ENCODE measurements at regions of chr19 and their contacts with region 1.

Region 1: GRCh38 chr19:58362272-58362994 is at the start of gene ZNF497:
- DNase-seq: peak; percentile 91
- ATAC-seq: peak; percentile 96
- H3K4me3 ChIP-seq: peak within 1 kb of the TSS; percentile 76 to 92 (median 80)
- H3K27ac ChIP-seq: peak within 1 kb of the TSS; percentile 97
- H3K4me1 ChIP-seq: peaks cover 11% of the 10 kb centered on the region
- H3K27me3 ChIP-seq: no peaks in the 10 kb centered on the region
- CTCF ChIP-seq: peak; percentile 54
- EP300 ChIP-seq: no peak
- POLR2A ChIP-seq: peak; percentile 78 to 93
- RAD21 ChIP-seq: 0 out of 2 replicates have a peak, but pooled peaks have one; percentile 6
- total RNA-seq, gene ZNF497: 1.1 and 1.9 TPM in 2 replicates

Region 2: GRCh38 chr19:58182989-58183816 is 179.2 kb before region 1 on chr19 and contains the start of gene ZNF274:
- CTCF ChIA-PET with region 1: no interaction called
- POLR2A ChIA-PET with region 1: interaction called, 10 read pairs
- in situ Hi-C with region 1: no loop called
- intact Hi-C with region 1: no loop called
- DNase-seq: peak; percentile 90
- ATAC-seq: peak; percentile 92
- H3K4me3 ChIP-seq: peak within 1 kb of the TSS; percentile 77 to 93 (median 88)
- H3K27ac ChIP-seq: peak within 1 kb of the TSS; percentile 100
- H3K4me1 ChIP-seq: peaks cover 12% of the 10 kb centered on the region
- H3K27me3 ChIP-seq: no peaks in the 10 kb centered on the region; a peak in 1 of 5 replicates
- CTCF ChIP-seq: no peak
- EP300 ChIP-seq: no peak
- POLR2A ChIP-seq: peak; percentile 55 to 77
- RAD21 ChIP-seq: peak; percentile 32; the same call in 1 of the 2 replicates
- total RNA-seq, gene ZNF274: 17.0 and 23.0 TPM in 2 replicates

Region 3: GRCh38 chr19:58261968-58262921 is 100.2 kb before region 1 on chr19:
- CTCF ChIA-PET with region 1: no interaction called
- POLR2A ChIA-PET with region 1: no interaction called
- in situ Hi-C with region 1: no loop called
- intact Hi-C with region 1: no loop called
- DNase-seq: no peak
- ATAC-seq: no peak
- H3K4me3 ChIP-seq: no peak overlapping the region
- H3K27ac ChIP-seq: no peak overlapping the region
- H3K4me1 ChIP-seq: no peaks in the 10 kb centered on the region
- H3K27me3 ChIP-seq: no peaks in the 10 kb centered on the region
- CTCF ChIP-seq: no peak
- EP300 ChIP-seq: no peak
- POLR2A ChIP-seq: no peak
- RAD21 ChIP-seq: no peak

Region 4: DNA sequence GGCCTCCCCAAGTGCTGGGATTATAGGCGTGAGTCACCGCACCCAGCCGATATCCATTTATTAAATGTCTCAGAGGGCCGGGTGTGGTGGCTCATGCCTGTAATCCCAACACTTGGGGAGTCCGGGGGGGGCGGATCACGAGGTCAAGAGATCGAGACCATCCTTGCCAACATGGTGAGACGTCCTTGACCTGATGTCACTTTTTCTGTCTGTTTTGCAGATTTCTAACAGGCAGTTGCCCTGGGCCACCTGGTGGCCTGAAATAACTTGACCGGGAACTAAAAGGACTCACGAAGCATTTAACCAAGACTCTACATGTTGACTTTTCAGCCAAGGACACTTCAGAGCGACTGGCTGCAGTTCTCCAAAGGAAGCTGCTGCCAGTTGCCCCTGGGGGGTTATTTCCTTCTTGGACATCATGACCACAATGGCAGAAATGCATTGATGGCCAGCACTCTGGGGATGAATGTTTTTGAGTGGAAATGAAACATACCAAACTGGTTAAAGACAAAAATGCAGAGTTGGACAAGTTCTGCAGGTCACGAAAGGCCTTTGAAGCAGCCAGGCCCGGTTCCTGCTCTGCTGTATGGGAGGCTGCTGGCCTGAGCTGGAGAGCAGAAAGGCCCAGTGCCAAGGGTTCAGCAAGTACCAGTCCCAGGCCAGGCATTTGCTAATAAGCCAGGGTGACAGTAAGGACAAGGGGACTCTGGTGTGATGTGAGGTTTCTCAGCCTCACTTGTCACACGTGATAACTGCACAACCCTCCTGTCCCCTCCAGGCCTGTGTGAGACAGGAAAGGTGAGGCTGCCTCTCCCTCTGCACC is 10.1 kb after region 1 on chr19:
- CTCF ChIA-PET with region 1: no interaction called
- POLR2A ChIA-PET with region 1: interaction called, 33 read pairs
- in situ Hi-C with region 1: no loop called
- intact Hi-C with region 1: no loop called
- DNase-seq: no peak
- ATAC-seq: peak; percentile 54
- H3K4me3 ChIP-seq: no peak overlapping the region
- H3K27ac ChIP-seq: no peak overlapping the region
- H3K4me1 ChIP-seq: peaks cover 9% of the 10 kb centered on the region
- H3K27me3 ChIP-seq: no peaks in the 10 kb centered on the region
- CTCF ChIP-seq: peak; percentile 49
- EP300 ChIP-seq: no peak
- POLR2A ChIP-seq: no peak
- RAD21 ChIP-seq: 0 out of 2 replicates have a peak, but pooled peaks have one; percentile 25

Region 5: DNA sequence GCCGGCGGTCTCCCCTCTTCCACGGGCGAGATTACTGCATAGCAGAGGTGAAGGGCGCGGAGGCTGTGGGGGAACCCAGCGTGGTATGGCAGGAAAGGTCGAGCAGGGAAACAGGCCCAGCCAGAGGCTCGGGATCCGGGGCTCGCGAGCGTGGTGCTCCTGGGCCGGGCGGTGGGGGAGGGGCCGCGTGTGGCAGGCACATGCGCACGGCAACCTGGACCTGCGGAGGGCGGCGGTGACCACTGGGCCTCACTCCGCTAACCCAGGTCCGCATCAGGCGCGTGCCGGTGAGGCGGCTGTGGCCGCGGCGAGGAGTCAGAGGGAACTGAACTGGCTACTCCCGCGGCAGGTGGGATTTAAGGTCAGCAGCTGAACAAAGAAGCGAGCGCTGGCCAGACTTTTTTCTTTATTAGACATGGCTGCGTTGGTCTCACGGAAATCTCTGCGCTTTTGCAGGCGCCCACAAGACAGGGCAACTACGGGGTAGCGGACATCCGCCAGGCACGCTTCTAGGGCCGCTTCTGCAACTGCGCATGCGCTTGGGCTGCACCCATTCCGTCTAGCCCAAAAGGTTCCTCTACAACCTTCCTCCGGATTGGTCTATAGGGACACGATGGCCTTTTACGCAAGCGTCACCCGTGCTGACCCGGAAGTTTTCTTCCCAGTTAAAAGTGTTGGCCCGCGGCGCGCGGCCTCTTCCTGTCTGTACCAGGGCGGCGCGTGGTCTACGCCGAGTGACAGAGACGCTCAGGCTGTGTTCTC is 24.3 kb after region 1 on chr19 and contains the start of gene RPS5:
- CTCF ChIA-PET with region 1: no interaction called
- POLR2A ChIA-PET with region 1: interaction called, 19 read pairs
- in situ Hi-C with region 1: no loop called
- intact Hi-C with region 1: loop called (anchors 2 kb)
- DNase-seq: peak; percentile 99
- ATAC-seq: peak; percentile 88
- H3K4me3 ChIP-seq: peak within 1 kb of the TSS; percentile 83 to 98 (median 92)
- H3K27ac ChIP-seq: peak within 1 kb of the TSS; percentile 99
- H3K4me1 ChIP-seq: peaks cover 52% of the 10 kb centered on the region
- H3K27me3 ChIP-seq: no peaks in the 10 kb centered on the region; a peak in 1 of 5 replicates
- CTCF ChIP-seq: no peak
- EP300 ChIP-seq: no peak
- POLR2A ChIP-seq: peak; percentile 85 to 98
- RAD21 ChIP-seq: no peak; the same call in none of the 2 replicates
- total RNA-seq, gene RPS5: 1,544 and 1,715 TPM in 2 replicates

Region 6: GRCh38 chr19:58513694-58514563 is 151.5 kb after region 1 on chr19:
- CTCF ChIA-PET with region 1: no interaction called
- POLR2A ChIA-PET with region 1: interaction called, 11 read pairs
- in situ Hi-C with region 1: no loop called
- intact Hi-C with region 1: no loop called
- DNase-seq: peak; percentile 88
- ATAC-seq: peak; percentile 59
- H3K4me3 ChIP-seq: peak overlapping the region; percentile 36 to 81 (median 69)
- H3K27ac ChIP-seq: peak overlapping the region; percentile 79
- H3K4me1 ChIP-seq: peaks cover 73% of the 10 kb centered on the region
- H3K27me3 ChIP-seq: no peaks in the 10 kb centered on the region; a peak in 1 of 5 replicates
- CTCF ChIP-seq: peak; percentile 96
- EP300 ChIP-seq: no peak
- POLR2A ChIP-seq: peak; percentile 84 to 95
- RAD21 ChIP-seq: peak; percentile 97

Region 7: DNA sequence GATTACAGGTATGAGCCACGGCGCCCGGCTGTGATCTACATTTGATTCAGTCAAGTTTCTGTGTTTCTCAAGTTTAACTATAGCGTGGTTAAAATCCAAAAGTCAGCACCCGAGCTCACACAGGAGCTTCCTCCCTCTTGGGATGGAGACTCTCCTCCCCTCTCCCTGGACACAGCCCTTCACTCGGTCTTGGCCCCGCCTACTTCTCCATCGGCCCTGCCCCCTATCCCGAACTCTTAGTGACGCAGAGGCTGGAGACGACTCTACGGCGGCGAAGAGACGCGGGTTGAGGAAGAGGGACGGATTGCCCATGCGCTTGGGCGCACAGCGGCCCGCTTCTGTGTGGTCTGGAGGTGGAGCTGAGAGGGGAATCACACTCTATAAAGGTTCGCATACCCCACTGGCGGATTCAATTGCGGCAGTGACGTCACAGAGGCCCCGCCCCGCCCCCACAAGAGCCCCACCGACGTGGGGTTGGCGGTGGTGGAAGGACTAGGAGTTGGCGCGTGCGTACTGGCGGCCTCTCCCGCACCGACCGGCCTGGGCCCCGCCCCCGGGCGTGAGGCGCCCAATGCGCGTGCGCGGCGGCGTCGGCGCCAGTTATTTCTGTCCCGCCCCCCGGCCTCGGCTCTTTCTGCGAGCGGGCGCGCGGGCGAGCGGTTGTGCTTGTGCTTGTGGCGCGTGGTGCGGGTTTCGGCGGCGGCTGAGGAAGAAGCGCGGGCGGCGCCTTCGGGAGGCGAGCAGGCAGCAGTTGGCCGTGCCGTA is 181.6 kb after region 1 on chr19 and contains the start of gene TRIM28:
- CTCF ChIA-PET with region 1: no interaction called
- POLR2A ChIA-PET with region 1: interaction called, 16 read pairs
- in situ Hi-C with region 1: no loop called
- intact Hi-C with region 1: no loop called
- DNase-seq: peak; percentile 96
- ATAC-seq: peak; percentile 92
- H3K4me3 ChIP-seq: peak within 1 kb of the TSS; percentile 91 to 99 (median 96)
- H3K27ac ChIP-seq: peak within 1 kb of the TSS; percentile 80
- H3K4me1 ChIP-seq: peaks cover 24% of the 10 kb centered on the region
- H3K27me3 ChIP-seq: no peaks in the 10 kb centered on the region; a peak in 2 of 5 replicates
- CTCF ChIP-seq: no peak
- EP300 ChIP-seq: no peak; a peak in 1 of 4 replicates
- POLR2A ChIP-seq: peak; percentile 85 to 97
- RAD21 ChIP-seq: no peak; the same call in 1 of the 2 replicates
- total RNA-seq, gene TRIM28: 302 and 361 TPM in 2 replicates